WTC11 (cell line): ENCODE measurements at regions of chr1 and their contacts with region 1.

Region 1: GRCh38 chr1:224700915-224701531 is 84.9 kb downstream of the CNIH3 start:
- DNase-seq: peak; percentile 73
- ATAC-seq: peak; percentile 82
- H3K4me3 Mint-ChIP-seq: no peak overlapping the region
- H3K27ac Mint-ChIP-seq: no peak overlapping the region
- H3K4me1 Mint-ChIP-seq: peaks cover 41% of the 10 kb centered on the region
- H3K27me3 Mint-ChIP-seq: no peaks in the 10 kb centered on the region
- CTCF ChIP-seq: peak; percentile 23; the same call in 1 of the 2 replicates

Region 2: GRCh38 chr1:224713228-224713627 is 12.2 kb after region 1 on chr1:
- CTCF ChIA-PET with region 1: interaction called, 22 read pairs
- POLR2A ChIA-PET with region 1: no interaction called
- DNase-seq: no peak
- ATAC-seq: no peak
- H3K4me3 Mint-ChIP-seq: no peak overlapping the region
- H3K27ac Mint-ChIP-seq: no peak overlapping the region
- H3K4me1 Mint-ChIP-seq: peaks cover 4% of the 10 kb centered on the region; the same call in 1 of the 2 replicates
- H3K27me3 Mint-ChIP-seq: no peaks in the 10 kb centered on the region
- CTCF ChIP-seq: no peak

Region 3: DNA sequence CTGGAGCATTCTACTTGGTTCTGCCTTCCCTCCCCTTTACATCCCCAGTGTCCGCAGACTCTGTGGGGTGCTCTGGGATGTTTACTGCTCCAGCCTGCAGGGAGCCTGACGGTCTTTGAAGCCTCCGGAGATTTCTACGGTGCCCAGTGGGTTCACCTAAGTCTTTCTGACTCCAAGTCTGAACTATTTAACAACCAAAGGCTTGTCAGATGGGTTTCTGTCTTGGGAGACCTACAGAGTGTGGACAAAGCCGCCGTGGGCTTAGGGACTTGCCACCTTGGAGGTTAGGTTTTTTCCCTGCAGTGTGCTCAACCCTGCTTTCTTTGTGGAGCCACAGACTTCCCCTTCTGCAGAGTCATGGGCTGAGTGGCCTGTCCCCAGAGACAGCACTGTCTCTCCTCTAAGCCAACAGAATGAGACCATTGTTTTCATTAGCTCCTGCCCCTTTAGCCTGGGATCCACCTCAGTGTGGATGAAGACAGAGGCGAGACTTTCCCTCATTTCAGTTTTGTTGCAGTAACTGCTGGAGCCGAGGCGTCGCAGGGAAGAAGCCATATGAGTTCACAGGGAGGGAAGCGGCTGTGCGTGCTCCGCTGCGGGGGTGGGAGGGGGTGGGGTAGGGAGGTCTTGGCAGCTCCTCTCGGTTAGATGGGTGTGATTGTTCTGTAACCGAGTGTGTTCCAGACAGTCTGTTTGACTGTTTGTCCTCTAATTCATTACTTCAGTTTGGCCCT is 35.8 kb after region 1 on chr1:
- CTCF ChIA-PET with region 1: interaction called, 10 read pairs
- POLR2A ChIA-PET with region 1: no interaction called
- DNase-seq: peak; percentile 19
- ATAC-seq: peak; percentile 44
- H3K4me3 Mint-ChIP-seq: no peak overlapping the region
- H3K27ac Mint-ChIP-seq: peak overlapping the region; percentile 47; the same call in 1 of the 2 replicates
- H3K4me1 Mint-ChIP-seq: peaks cover 76% of the 10 kb centered on the region
- H3K27me3 Mint-ChIP-seq: no peaks in the 10 kb centered on the region
- CTCF ChIP-seq: no peak

Region 4: GRCh38 chr1:224879162-224879803 is 178.3 kb after region 1 on chr1:
- CTCF ChIA-PET with region 1: interaction called, 12 read pairs
- POLR2A ChIA-PET with region 1: no interaction called
- DNase-seq: no peak
- ATAC-seq: no peak
- H3K4me3 Mint-ChIP-seq: no peak overlapping the region
- H3K27ac Mint-ChIP-seq: no peak overlapping the region
- H3K4me1 Mint-ChIP-seq: peaks cover 64% of the 10 kb centered on the region
- H3K27me3 Mint-ChIP-seq: no peaks in the 10 kb centered on the region; the same call in 1 of the 2 replicates
- CTCF ChIP-seq: no peak